ENCODE measurements at regions of chrX and their contacts with region 1.

Region 1: GRCh38 chrX:54639346-54640102 is 109.5 kb downstream of the GNL3L start:
- DNase-seq: peak; percentile 96
- ATAC-seq: peak; percentile 99

Region 2: GRCh38 chrX:54551801-54552200 is 87.7 kb before region 1 on chrX:
- intact Hi-C with region 1: no loop called
- DNase-seq: no peak
- ATAC-seq: no peak

Region 3: DNA sequence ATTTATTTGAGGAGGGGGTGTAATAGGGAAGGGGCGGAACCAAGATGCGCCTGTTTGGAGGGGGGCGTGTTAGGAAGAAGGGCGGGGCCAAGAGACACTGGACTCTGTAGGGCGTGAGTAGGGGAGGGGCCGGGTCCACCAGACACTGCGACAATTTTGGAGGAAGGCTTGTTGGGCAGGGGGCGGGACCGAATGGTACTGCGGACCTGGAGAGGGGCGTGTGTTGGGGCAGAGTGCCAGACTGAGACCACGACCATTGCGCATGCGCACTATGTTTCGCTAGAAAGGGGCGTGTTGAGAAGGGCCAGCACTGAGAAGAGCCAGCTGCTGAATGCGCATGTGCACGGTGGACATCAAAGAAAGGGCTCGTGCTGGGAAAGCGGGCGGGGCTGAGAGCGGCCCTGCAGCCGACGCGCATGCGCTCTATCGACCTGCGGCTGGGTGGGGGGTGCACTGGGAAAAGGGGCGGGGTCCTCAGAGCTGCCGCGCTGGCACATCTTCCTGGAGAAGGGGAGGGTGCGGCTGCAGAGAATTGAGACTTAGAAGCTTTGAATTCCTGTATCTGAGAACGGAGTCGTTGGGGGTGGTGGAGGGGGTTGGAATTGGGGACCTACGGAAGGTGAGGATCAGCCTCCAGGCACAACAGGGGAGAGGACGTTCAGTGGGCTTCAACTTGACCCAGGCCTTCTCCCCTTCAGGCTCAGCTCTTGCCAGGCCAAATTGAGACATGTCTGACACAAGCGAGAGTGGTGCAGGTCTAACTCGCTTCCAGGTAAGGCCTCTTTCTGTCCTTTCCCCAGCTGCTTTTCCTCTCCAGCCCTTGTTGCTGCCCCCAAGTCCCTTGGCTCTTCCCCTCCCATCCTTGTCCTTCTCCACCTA is 169.3 kb after region 1 on chrX:
- intact Hi-C with region 1: loop called (anchors 1 kb)
- DNase-seq: peak; percentile 96
- ATAC-seq: peak; percentile 94

Region 4: GRCh38 chrX:55057675-55058249 is 418.2 kb after region 1 on chrX:
- intact Hi-C with region 1: loop called (anchors 2 kb)
- DNase-seq: no peak
- ATAC-seq: no peak

Measured in Right ventricle myocardium inferior (tissue), 1 donor.